Tibial artery (tissue), 4 donors: ENCODE measurements at regions of chr10 and their contacts with region 1.

Region 1: GRCh38 chr10:77970869-77971803 is 44.6 kb upstream of the DLG5 start:
- DNase-seq: peak; percentile 90 to 92
- H3K4me3 ChIP-seq: peak overlapping the region; percentile 13 to 17
- H3K27ac ChIP-seq: peak overlapping the region; percentile 81 to 87
- H3K4me1 ChIP-seq: peaks cover 0 to 55% (median 23%) of the 10 kb centered on the region in 4 donors
- H3K27me3 ChIP-seq: no peaks in the 10 kb centered on the region
- CTCF ChIP-seq: no peak

Region 2: DNA sequence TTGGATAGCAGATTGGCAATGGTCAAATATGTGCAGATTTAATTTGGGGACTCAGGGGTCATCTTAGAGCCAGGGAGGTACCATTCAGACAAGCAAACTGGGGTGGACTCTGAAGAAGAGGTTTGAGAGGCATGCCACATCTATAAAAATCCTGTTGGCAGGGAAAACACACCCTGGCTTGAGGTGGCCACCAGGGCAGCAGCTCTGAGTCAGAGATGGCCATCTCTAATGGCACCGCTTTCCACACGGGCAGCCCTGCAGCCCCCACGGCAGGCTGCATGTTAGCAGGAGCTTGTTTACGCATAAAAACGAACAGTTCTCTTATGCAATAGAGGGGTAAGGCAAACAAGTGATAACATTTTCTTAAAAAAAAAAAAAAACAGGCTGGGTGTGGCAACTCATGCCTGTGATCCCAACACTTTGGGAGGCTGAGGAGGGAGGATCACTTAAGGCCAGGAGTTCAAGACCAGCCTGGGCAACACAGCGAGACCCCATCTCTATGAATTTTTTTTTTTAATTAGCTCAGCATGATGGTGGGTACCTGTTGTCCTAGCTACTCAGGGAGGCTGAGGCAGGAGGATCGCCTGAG is 59.5 kb before region 1 on chr10:
- intact Hi-C with region 1: no loop called
- DNase-seq: no peak
- H3K4me3 ChIP-seq: no peak overlapping the region
- H3K27ac ChIP-seq: no peak overlapping the region
- H3K4me1 ChIP-seq: peaks cover 0 to 65% (median 23%) of the 10 kb centered on the region in 4 donors
- H3K27me3 ChIP-seq: no peaks in the 10 kb centered on the region
- CTCF ChIP-seq: no peak

Region 3: GRCh38 chr10:77926566-77927401 is 44.4 kb before region 1 on chr10 and contains the start of gene DLG5:
- intact Hi-C with region 1: loop called (anchors 2 kb)
- DNase-seq: peak; percentile 68 to 84
- H3K4me3 ChIP-seq: peak within 1 kb of the TSS; percentile 67 to 73
- H3K27ac ChIP-seq: peak within 1 kb of the TSS; percentile 78 to 87
- H3K4me1 ChIP-seq: peaks cover 0 to 50% (median 23%) of the 10 kb centered on the region in 4 donors
- H3K27me3 ChIP-seq: no peaks in the 10 kb centered on the region
- CTCF ChIP-seq: peak in 1 of 2 experiments; percentile 5